Spleen (tissue), 13 donors: ENCODE measurements at regions of chr19 and their contacts with region 1.

Region 1: DNA sequence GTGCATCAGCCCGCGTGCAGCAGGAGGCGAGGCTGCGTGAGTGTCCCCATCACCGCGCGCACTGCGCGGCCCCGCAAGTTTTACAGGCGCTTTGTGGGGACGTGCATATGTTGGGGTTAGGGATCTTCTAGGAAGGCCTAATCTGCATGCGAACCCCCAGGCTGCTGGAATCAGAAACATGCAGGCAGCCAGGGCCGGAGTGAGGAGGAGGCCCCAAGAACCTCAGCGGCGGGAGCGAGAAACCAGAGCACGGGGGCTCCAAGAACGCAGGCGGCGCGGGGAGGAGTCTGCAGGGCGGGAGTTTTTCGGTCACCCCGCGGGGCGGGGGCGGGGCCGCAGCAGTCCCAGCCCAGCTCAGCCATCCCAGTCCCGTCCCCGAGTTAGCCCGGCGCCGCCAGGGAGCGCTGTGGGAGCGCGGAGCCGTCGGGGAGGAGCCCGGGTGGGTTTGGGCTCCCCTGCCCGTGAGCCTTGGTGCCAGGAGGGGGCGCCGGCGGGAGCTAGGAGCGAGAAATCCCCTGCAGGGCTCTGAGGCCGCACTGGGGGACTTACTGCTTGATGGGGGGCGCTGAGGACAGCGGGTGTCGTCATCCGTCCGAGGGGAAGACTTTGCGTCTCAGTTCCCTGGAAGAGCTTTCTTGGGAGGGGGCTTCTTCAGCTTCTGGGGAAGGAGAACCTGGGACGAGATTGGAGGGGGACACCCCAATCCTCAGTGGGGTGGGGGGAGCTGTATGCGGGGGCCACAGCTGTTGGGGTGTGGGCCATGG is 933 bp upstream of the NRTN start:
- DNase-seq: peak; percentile 95
- H3K4me3 ChIP-seq: peak overlapping the region in 7 of 8 donors; percentile 7 to 62 (median 29)
- H3K27ac ChIP-seq: peak overlapping the region in 1 of 8 donors; percentile 16
- H3K4me1 ChIP-seq: peaks cover 6 to 62% (median 32%) of the 10 kb centered on the region in 6 donors
- H3K27me3 ChIP-seq: peaks cover 0 to 71% (median 46%) of the 10 kb centered on the region in 7 donors
- CTCF ChIP-seq: peak; percentile 74 to 96 (median 91)
- POLR2A ChIP-seq: no peak

Region 2: GRCh38 chr19:5891938-5892771 is 88.2 kb after region 1 on chr19:
- intact Hi-C with region 1: loop called (anchors 5 kb)
- DNase-seq: no peak
- H3K4me3 ChIP-seq: no peak overlapping the region
- H3K27ac ChIP-seq: no peak overlapping the region
- H3K4me1 ChIP-seq: peaks cover 0 to 46% (median 30%) of the 10 kb centered on the region in 6 donors
- H3K27me3 ChIP-seq: peaks cover 0 to 40% (median 17%) of the 10 kb centered on the region in 7 donors
- CTCF ChIP-seq: peak in 8 of 11 experiments; percentile 26 to 74 (median 56)
- POLR2A ChIP-seq: no peak

Region 3: DNA sequence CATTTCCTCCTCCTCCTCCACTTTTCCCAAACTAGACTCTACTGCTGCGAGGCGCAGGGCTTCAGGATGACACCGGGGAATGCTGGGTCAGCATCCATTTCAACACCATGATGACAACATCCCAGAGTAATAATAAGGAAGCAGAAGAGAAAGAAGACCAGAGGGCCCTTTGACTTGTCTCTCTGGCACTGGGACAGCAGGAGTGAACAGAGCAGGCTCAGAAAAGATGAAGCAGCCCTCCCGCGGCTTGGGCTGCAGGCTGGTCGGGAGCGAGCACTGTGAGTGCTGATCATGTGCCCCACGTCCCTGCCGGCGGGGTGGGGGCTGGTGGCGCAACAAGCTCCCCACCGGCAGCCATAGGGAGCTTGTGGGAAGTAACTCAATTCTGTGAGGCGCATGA is 143.5 kb after region 1 on chr19:
- intact Hi-C with region 1: no loop called
- DNase-seq: no peak
- H3K4me3 ChIP-seq: peak overlapping the region in 2 of 8 donors; percentile 0 to 46
- H3K27ac ChIP-seq: peak overlapping the region in 7 of 8 donors; percentile 72 to 87 (median 84)
- H3K4me1 ChIP-seq: peaks cover 36 to 82% (median 62%) of the 10 kb centered on the region in 6 donors
- H3K27me3 ChIP-seq: no peaks in the 10 kb centered on the region
- CTCF ChIP-seq: no peak
- POLR2A ChIP-seq: no peak